Body of pancreas (tissue), 4 donors: ENCODE measurements at regions of chr17 and their contacts with region 1.

Region 1: GRCh38 chr17:11047228-11047627 is 193.8 kb upstream of the SHISA6 start:
- DNase-seq: no peak
- ATAC-seq: no peak
- H3K4me3 ChIP-seq: no peak overlapping the region
- H3K27ac ChIP-seq: no peak overlapping the region
- H3K4me1 ChIP-seq: no peaks in the 10 kb centered on the region
- H3K27me3 ChIP-seq: no peaks in the 10 kb centered on the region
- CTCF ChIP-seq: no peak
- POLR2A ChIP-seq: no peak

Region 2: DNA sequence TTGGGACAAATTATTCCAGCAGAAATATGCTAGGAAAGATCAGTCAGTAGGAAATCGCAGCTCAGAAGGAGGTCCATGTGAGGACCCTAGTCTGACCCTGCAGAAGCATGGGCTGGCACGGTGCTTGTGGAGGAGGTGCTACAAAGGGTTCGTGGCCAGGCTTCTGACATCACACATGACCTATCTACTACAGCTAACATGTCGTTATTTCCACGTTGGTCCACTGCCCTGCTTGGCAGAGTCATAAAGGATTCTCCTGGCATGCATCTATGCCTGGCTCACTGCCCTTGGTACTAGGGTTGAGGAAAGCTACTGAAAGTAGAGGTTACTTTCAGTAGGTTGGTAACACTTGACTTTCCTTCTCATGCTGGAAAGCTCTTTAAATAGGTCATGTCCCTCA is 75.7 kb after region 1 on chr17:
- intact Hi-C with region 1: loop called (anchors 10 kb)
- DNase-seq: peak in 2 of 4 donors; percentile 3 to 14
- ATAC-seq: no peak
- H3K4me3 ChIP-seq: no peak overlapping the region
- H3K27ac ChIP-seq: no peak overlapping the region
- H3K4me1 ChIP-seq: no peaks in the 10 kb centered on the region
- H3K27me3 ChIP-seq: no peaks in the 10 kb centered on the region
- CTCF ChIP-seq: no peak
- POLR2A ChIP-seq: no peak

Region 3: DNA sequence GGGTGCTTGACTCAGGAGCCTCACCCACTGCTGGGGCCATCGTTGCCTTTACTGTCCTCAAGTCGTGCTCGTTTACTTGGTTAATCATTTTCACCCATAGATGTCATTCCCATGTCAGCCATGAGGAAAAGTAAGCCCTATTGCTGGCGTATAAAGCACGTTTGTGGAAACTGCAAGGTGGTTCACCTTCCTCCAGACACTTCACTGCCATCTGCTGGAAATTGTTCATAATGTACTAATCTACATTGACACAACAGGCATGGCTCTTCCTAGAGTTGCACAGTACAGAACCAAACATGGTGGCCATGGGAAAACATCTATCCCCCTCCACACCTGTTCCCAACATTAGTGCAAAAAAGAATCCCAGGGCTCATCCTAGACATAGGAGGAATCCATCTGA is 833.5 kb after region 1 on chr17:
- intact Hi-C with region 1: no loop called
- DNase-seq: no peak
- ATAC-seq: no peak
- H3K4me3 ChIP-seq: no peak overlapping the region
- H3K27ac ChIP-seq: no peak overlapping the region
- H3K4me1 ChIP-seq: no peaks in the 10 kb centered on the region
- H3K27me3 ChIP-seq: no peaks in the 10 kb centered on the region
- CTCF ChIP-seq: peak in 3 of 7 experiments; percentile 15 to 37 (median 27)
- POLR2A ChIP-seq: no peak